Breast epithelium (tissue), 4 donors: ENCODE measurements at regions of chr19 and their contacts with region 1.

Region 1: GRCh38 chr19:50155520-50156109 is 7.5 kb downstream of the IZUMO2 start:
- DNase-seq: no peak
- H3K4me3 ChIP-seq: no peak overlapping the region
- H3K27ac ChIP-seq: no peak overlapping the region
- H3K4me1 ChIP-seq: no peaks in the 10 kb centered on the region
- H3K27me3 ChIP-seq: peaks cover 0 to 3% of the 10 kb centered on the region in 2 donors
- CTCF ChIP-seq: no peak
- POLR2A ChIP-seq: no peak

Region 2: GRCh38 chr19:48950159-48950558 is 1205.5 kb before region 1 on chr19:
- intact Hi-C with region 1: no loop called
- DNase-seq: no peak
- H3K4me3 ChIP-seq: no peak overlapping the region
- H3K27ac ChIP-seq: no peak overlapping the region
- H3K4me1 ChIP-seq: peaks cover 0 to under 1% of the 10 kb centered on the region in 2 donors
- H3K27me3 ChIP-seq: no peaks in the 10 kb centered on the region
- CTCF ChIP-seq: no peak
- POLR2A ChIP-seq: no peak

Region 3: DNA sequence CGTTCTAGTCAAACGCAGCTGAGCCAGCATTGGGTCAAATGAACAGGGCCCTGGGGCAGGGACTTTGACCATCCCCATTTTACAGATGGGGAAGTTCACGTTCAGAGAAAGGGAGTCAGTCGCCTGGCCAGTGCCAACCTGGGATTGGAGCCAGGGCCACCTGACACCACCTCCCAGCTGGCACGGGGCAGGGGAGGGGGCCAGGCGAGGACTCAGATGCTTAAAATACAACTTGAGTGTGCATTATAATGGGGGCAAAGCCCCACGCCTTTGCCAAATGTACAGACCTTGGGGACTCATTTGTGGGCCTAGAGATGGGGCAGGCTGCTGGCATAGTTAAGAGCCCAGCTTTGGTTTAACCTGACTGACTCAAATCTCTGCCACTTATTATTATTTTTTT is 550.0 kb before region 1 on chr19:
- intact Hi-C with region 1: no loop called
- DNase-seq: no peak
- H3K4me3 ChIP-seq: no peak overlapping the region
- H3K27ac ChIP-seq: no peak overlapping the region
- H3K4me1 ChIP-seq: no peaks in the 10 kb centered on the region
- H3K27me3 ChIP-seq: no peaks in the 10 kb centered on the region
- CTCF ChIP-seq: no peak
- POLR2A ChIP-seq: no peak

Region 4: GRCh38 chr19:50221087-50221486 is 65.5 kb after region 1 on chr19:
- intact Hi-C with region 1: loop called (anchors 2 kb)
- DNase-seq: no peak
- H3K4me3 ChIP-seq: no peak overlapping the region
- H3K27ac ChIP-seq: no peak overlapping the region
- H3K4me1 ChIP-seq: no peaks in the 10 kb centered on the region
- H3K27me3 ChIP-seq: no peaks in the 10 kb centered on the region
- CTCF ChIP-seq: no peak
- POLR2A ChIP-seq: no peak